ENCODE measurements at regions of chr14 and their contacts with region 1.

Region 1: DNA sequence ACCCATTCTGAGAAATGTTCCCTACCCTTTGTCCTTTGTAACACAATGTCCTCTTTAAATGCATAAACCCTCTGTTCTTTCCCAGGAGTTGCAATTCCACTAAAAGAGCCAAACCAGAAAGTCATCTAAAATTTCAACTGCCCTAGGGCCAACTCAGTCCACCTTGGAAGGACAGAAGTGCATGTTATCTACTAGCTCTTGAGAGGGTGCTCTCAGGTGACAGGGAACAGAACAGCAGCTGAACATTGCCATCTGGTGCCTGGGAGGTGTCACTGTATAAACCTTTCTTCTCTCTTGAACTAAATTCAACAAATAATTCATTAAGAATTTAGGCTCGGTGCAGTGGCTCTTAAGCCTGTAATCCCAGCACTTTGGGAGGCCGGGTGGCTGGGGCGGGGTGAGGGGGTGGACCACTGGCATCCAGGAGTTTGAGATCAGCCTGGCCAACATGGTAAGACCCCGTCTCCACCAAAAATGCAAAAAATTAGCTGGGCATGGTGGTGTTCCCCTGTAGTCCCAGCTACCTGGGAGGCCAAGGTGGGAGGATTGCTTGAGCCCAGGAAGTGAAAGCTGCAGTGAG is 10.3 kb upstream of the FERMT2 start:
- DNase-seq: peak in 34 of 35 experiments; percentile 11 to 78 (median 48)
- ATAC-seq: peak; percentile 75 to 90 (median 84)
- H3K4me3 ChIP-seq: no peak overlapping the region
- H3K4me3 Mint-ChIP-seq: no peak overlapping the region
- H3K27ac ChIP-seq: no peak overlapping the region
- H3K27ac Mint-ChIP-seq: peak overlapping the region; percentile 56 to 60
- H3K4me1 ChIP-seq: no peaks in the 10 kb centered on the region
- H3K4me1 Mint-ChIP-seq: peaks cover 7 to 11% (median 7%) of the 10 kb centered on the region in 3 donors
- H3K27me3 ChIP-seq: no peaks in the 10 kb centered on the region
- H3K27me3 Mint-ChIP-seq: no peaks in the 10 kb centered on the region

Region 2: GRCh38 chr14:52563120-52563519 is 398.0 kb before region 1 on chr14:
- CTCF ChIA-PET with region 1: no interaction called
- POLR2A ChIA-PET with region 1: interaction called in 1 of 2 experiments, 12 read pairs
- DNase-seq: no peak
- ATAC-seq: no peak
- H3K4me3 ChIP-seq: no peak overlapping the region
- H3K4me3 Mint-ChIP-seq: no peak overlapping the region
- H3K27ac ChIP-seq: no peak overlapping the region
- H3K27ac Mint-ChIP-seq: no peak overlapping the region
- H3K4me1 ChIP-seq: no peaks in the 10 kb centered on the region
- H3K4me1 Mint-ChIP-seq: no peaks in the 10 kb centered on the region
- H3K27me3 ChIP-seq: peaks cover 0 to 4% of the 10 kb centered on the region in 2 experiments
- H3K27me3 Mint-ChIP-seq: peaks cover 7 to 10% of the 10 kb centered on the region in 2 donors

Region 3: DNA sequence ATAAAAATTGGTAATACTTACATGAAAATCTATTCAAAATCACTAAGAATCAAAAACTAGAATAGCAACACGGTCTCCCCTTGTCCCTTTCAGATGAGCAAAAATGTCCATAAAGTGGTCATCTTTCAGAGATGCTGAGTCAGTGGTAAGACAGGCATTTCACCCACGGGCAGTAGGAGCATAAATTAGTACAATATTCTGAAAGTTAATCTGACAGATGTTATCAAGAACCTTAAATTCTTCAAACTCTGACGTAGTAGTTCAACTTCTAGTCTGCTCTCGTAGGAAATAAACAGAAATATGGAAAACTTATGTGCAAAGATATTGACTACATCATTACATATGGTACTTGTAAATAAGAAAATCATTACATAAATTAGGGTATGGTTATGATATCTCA is 136.6 kb before region 1 on chr14:
- CTCF ChIA-PET with region 1: interaction called, 21 to 78 read pairs
- POLR2A ChIA-PET with region 1: no interaction called
- DNase-seq: no peak
- ATAC-seq: no peak
- H3K4me3 ChIP-seq: no peak overlapping the region
- H3K4me3 Mint-ChIP-seq: no peak overlapping the region
- H3K27ac ChIP-seq: no peak overlapping the region
- H3K27ac Mint-ChIP-seq: no peak overlapping the region
- H3K4me1 ChIP-seq: no peaks in the 10 kb centered on the region
- H3K4me1 Mint-ChIP-seq: peaks cover 0 to 6% (median 0%) of the 10 kb centered on the region in 3 donors
- H3K27me3 ChIP-seq: peaks cover 0 to 3% of the 10 kb centered on the region in 2 experiments
- H3K27me3 Mint-ChIP-seq: peaks cover 2 to 3% of the 10 kb centered on the region in 2 donors

Region 4: GRCh38 chr14:53209370-53209769 is 248.2 kb after region 1 on chr14:
- CTCF ChIA-PET with region 1: no interaction called
- POLR2A ChIA-PET with region 1: no interaction called
- DNase-seq: no peak
- ATAC-seq: no peak
- H3K4me3 ChIP-seq: no peak overlapping the region
- H3K4me3 Mint-ChIP-seq: no peak overlapping the region
- H3K27ac ChIP-seq: no peak overlapping the region
- H3K27ac Mint-ChIP-seq: no peak overlapping the region
- H3K4me1 ChIP-seq: no peaks in the 10 kb centered on the region
- H3K4me1 Mint-ChIP-seq: no peaks in the 10 kb centered on the region
- H3K27me3 ChIP-seq: no peaks in the 10 kb centered on the region
- H3K27me3 Mint-ChIP-seq: no peaks in the 10 kb centered on the region

Measured in T-cell (primary cell).